Activated CD4-positive, alpha-beta T cell treated with anti-CD3 and anti-CD28 coated beads for 36 hours (primary cell): ENCODE measurements at regions of chr2 and their contacts with region 1.

Region 1: DNA sequence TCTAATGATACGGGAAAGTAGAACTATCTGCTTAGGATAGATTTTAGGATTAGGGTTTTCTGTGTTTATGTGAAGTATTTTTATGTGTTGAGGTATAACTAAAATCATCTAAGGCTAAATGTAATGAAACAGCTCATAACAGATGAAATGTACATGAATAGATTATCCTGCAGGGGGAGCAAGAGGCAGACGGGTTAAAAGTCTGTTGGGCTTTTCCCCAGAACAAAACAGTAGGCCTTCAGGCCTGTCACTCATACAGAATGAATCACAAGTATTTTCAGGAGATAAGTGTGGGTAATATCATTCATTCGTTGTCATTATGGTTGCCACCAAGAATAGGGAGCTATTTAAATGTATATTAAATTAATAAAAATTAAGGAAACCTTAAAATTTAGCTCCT is 107.9 kb upstream of the IL1R2 start:
- DNase-seq: peak; percentile 67
- ATAC-seq: peak; percentile 90
- H3K4me3 Mint-ChIP-seq: no peak overlapping the region
- H3K27ac Mint-ChIP-seq: peak overlapping the region; percentile 12
- H3K4me1 Mint-ChIP-seq: peaks cover 18% of the 10 kb centered on the region
- H3K27me3 Mint-ChIP-seq: no peaks in the 10 kb centered on the region

Region 2: GRCh38 chr2:101837354-101837753 is 46.5 kb before region 1 on chr2:
- CTCF ChIA-PET with region 1: no interaction called
- POLR2A ChIA-PET with region 1: no interaction called
- intact Hi-C with region 1: no loop called
- DNase-seq: no peak
- ATAC-seq: no peak
- H3K4me3 Mint-ChIP-seq: no peak overlapping the region
- H3K27ac Mint-ChIP-seq: no peak overlapping the region
- H3K4me1 Mint-ChIP-seq: peaks cover 16% of the 10 kb centered on the region
- H3K27me3 Mint-ChIP-seq: no peaks in the 10 kb centered on the region

Region 3: DNA sequence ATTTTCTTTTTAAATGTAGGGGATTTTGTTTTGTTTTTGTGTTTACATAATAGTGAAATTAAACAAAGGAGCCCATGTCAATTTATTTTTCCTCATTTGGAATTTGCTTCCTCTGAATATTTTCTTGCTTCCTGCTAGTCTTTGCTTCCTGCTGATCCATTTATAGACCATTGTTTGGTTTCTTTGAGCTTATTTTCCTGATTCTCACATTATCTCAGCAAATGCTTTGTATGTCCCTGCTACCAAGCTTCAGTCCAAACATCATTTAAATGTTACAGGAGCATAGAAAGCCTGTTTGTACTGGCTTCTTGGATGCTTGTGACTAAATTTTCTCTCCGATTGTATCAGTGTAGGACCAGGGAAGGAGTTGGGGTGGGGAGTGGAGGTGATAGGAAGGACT is 19.4 kb before region 1 on chr2:
- CTCF ChIA-PET with region 1: interaction called, 24 read pairs
- POLR2A ChIA-PET with region 1: no interaction called
- intact Hi-C with region 1: no loop called
- DNase-seq: no peak
- ATAC-seq: no peak
- H3K4me3 Mint-ChIP-seq: no peak overlapping the region
- H3K27ac Mint-ChIP-seq: no peak overlapping the region
- H3K4me1 Mint-ChIP-seq: peaks cover 4% of the 10 kb centered on the region
- H3K27me3 Mint-ChIP-seq: no peaks in the 10 kb centered on the region

Region 4: GRCh38 chr2:101900375-101900774 is 16.5 kb after region 1 on chr2:
- CTCF ChIA-PET with region 1: interaction called, 33 read pairs
- POLR2A ChIA-PET with region 1: interaction called, 3 read pairs
- intact Hi-C with region 1: no loop called
- DNase-seq: peak; percentile 82
- ATAC-seq: peak; percentile 93
- H3K4me3 Mint-ChIP-seq: peak overlapping the region; percentile 24
- H3K27ac Mint-ChIP-seq: peak overlapping the region; percentile 90
- H3K4me1 Mint-ChIP-seq: peaks cover 38% of the 10 kb centered on the region
- H3K27me3 Mint-ChIP-seq: peaks cover 10% of the 10 kb centered on the region

Region 5: DNA sequence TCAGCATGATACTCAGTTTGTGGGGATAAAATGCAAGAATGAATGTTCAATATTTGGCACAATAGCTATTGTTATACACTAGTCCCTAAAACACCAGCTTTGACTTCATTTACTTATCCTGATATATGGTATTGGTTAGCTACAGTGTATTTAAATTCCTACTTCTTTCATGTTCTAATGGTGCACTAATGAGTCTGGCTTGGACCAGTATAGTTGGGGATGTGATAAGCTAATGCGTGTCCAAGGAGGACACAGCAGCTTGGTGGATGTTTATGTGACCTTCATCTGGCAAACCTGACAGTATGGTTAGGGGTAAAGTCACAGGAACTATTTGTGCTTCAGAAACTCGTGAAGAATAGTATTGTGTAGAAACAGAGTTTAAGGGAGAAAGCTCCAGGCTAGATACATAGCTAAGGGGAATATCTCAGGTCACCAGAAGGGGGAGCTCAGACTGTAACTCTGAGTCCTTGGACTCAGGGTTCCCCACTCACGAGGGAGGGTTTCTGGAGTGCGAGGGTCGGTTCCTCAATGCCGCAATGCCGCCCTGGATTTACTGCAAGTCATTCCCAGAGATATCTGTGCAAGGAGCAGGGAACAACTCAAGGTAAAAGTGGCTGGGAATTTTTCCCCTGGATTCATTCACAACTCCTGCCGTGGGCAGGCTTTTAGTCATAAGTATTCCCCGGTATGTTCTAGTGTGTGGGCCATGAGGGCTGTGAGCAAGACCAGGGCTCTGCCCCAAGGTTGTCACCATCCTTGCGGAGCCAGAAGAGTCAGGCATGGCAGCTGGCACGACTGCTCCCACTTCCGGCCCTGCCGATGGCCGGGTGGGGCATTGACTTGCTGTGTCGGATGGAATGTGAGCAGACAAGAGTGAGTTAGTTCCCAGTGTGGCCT is 122.4 kb after region 1 on chr2:
- CTCF ChIA-PET with region 1: interaction called, 34 read pairs
- POLR2A ChIA-PET with region 1: no interaction called
- intact Hi-C with region 1: loop called in 1 of 2 experiments (anchors 5 kb)
- DNase-seq: peak; percentile 67
- ATAC-seq: peak; percentile 27
- H3K4me3 Mint-ChIP-seq: peak overlapping the region; percentile 5
- H3K27ac Mint-ChIP-seq: peak overlapping the region; percentile 77
- H3K4me1 Mint-ChIP-seq: peaks cover 16% of the 10 kb centered on the region
- H3K27me3 Mint-ChIP-seq: no peaks in the 10 kb centered on the region

Region 6: GRCh38 chr2:102166189-102166845 is 282.5 kb after region 1 on chr2:
- CTCF ChIA-PET with region 1: interaction called, 16 read pairs
- POLR2A ChIA-PET with region 1: no interaction called
- intact Hi-C with region 1: loop called in 1 of 2 experiments (anchors 5 kb)
- DNase-seq: no peak
- ATAC-seq: peak; percentile 47
- H3K4me3 Mint-ChIP-seq: no peak overlapping the region
- H3K27ac Mint-ChIP-seq: no peak overlapping the region
- H3K4me1 Mint-ChIP-seq: peaks cover 9% of the 10 kb centered on the region
- H3K27me3 Mint-ChIP-seq: no peaks in the 10 kb centered on the region

Region 7: DNA sequence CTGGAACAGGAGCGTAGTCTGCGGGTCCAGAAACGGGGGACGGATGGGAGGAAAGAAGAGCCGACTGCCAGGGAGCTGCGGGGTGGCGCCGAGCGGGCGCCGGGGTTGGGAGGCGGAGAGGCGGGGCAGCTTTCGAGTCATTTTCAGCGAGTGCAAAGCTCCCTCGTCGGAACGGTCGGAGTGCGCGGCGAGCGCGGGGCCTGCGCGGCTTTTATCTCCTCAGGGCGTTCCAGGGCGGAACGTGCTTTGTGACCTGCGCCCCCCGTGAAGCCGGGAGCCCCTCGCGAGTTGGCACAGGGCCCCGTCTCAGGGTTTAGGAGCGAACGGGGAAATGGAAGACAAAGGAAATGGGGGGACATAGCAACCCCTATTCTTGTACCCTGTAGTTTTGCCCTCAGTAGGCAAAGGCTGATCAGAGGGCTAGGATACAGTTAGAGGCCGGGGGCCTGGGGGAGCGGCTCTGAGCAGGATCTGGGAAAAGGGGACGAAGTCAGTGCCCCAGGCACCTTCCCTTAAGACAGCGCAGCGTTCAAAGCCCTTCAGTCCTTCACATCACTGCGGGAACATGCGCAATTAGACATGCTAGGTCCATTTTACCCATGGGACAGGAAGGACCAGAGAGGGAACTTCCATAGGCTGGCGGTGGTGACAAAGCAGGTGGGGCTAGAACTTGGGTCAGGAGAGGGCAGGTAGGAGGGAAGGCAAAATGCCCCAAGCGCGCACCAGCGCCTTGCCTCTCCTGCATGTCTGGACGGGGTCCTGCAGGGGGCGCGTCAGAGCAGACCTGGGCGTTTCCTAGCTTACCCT is 367.4 kb after region 1 on chr2:
- CTCF ChIA-PET with region 1: interaction called, 11 read pairs
- POLR2A ChIA-PET with region 1: no interaction called
- intact Hi-C with region 1: no loop called
- DNase-seq: peak; percentile 85
- ATAC-seq: peak; percentile 68
- H3K4me3 Mint-ChIP-seq: peak overlapping the region; percentile 73
- H3K27ac Mint-ChIP-seq: peak overlapping the region; percentile 76
- H3K4me1 Mint-ChIP-seq: peaks cover 38% of the 10 kb centered on the region
- H3K27me3 Mint-ChIP-seq: no peaks in the 10 kb centered on the region

Region 8: GRCh38 chr2:102449370-102449974 is 565.6 kb after region 1 on chr2:
- CTCF ChIA-PET with region 1: interaction called, 12 read pairs
- POLR2A ChIA-PET with region 1: no interaction called
- intact Hi-C with region 1: loop called (anchors 1 kb)
- DNase-seq: peak; percentile 85
- ATAC-seq: peak; percentile 58
- H3K4me3 Mint-ChIP-seq: no peak overlapping the region
- H3K27ac Mint-ChIP-seq: no peak overlapping the region
- H3K4me1 Mint-ChIP-seq: peaks cover 6% of the 10 kb centered on the region
- H3K27me3 Mint-ChIP-seq: no peaks in the 10 kb centered on the region